Posterior vena cava (tissue), 2 donors: ENCODE measurements at regions of chr4 and their contacts with region 1.

Region 1: GRCh38 chr4:168923526-168924194 is 86.4 kb downstream of the CBR4 start:
- DNase-seq: no peak

Region 2: DNA sequence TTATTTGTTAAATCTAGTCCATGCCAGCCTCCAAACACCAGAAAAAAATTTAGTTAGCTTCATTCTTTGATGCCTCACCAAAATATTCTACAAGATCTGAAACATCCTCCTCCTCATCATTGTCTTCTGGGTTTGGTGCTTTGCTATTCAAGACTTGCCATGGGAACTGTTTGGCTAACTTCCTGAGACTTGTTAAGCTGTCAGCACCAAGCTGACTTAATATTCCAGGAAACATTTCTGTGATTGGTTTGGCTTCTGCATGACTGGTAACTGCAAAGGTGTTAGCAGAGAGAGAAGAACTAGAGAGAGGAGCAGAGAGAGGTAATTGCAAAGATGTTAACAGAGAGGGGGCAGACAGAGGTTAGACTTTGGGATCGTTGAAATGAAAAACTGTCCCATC is 325.5 kb before region 1 on chr4:
- intact Hi-C with region 1: loop called in 1 of 2 experiments (anchors 10 kb)
- DNase-seq: no peak

Region 3: GRCh38 chr4:168621806-168622589 is 301.7 kb before region 1 on chr4:
- intact Hi-C with region 1: no loop called
- DNase-seq: no peak

Region 4: GRCh38 chr4:169045862-169046584 is 122.4 kb after region 1 on chr4:
- intact Hi-C with region 1: no loop called
- DNase-seq: no peak